Dorsolateral prefrontal cortex (tissue), 120 donors: ENCODE measurements at regions of chr19 and their contacts with region 1.

Region 1: DNA sequence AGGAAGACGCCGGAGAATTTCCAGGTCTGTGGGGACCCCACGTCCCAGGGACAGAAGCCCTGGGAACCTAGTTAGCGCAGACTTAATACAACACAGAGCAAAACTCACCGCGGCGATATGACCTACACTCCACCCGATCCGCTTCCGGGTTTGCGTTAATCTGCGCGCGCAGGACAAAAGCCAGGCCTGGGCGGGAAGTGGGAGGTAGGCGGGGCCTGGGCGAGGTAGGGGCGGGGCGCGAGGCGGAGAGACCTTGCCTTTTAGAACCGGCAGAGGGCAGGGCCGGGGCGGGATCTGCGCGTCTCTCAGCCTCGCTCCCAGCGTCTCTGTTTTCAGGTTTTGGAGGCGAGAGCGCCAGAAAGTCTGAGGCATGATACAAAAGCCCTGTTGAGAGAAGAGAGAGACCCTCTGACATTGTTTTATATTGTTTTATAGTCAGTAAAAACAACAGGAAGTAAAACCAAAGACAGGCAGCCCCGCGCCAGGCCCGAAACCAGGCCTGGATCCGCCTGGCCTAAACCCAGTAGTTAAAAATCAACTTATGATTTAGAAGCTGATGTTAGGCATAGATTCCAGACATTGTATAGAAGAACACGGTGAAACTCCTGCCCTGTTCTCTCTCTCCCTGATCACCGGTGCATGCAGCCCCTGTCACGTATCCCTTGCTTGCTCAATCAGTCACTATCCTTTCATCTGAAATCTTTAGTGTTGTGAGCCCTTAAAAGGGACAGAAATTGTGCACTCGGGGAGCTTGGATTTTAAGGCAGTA is at the start of gene ZNF611:
- DNase-seq: peak; percentile 94 to 98 (median 97)
- H3K4me3 ChIP-seq: peak within 1 kb of the TSS; percentile 64 to 95 (median 81)
- H3K27ac ChIP-seq: peak within 1 kb of the TSS; percentile 49 to 94 (median 87)
- H3K27me3 ChIP-seq: no peaks in the 10 kb centered on the region
- CTCF ChIP-seq: peak in 55 of 56 donors; percentile 14 to 83 (median 64)
- total RNA-seq, gene ZNF611: 18.1 to 38.1 (median 26.2) TPM

Region 2: GRCh38 chr19:52590728-52591127 is 144.3 kb before region 1 on chr19:
- intact Hi-C with region 1: no loop called
- DNase-seq: no peak
- H3K4me3 ChIP-seq: no peak overlapping the region
- H3K27ac ChIP-seq: no peak overlapping the region
- H3K27me3 ChIP-seq: no peaks in the 10 kb centered on the region
- CTCF ChIP-seq: no peak

Region 3: GRCh38 chr19:52601025-52601973 is 133.8 kb before region 1 on chr19:
- intact Hi-C with region 1: loop called in 1 of 2 experiments (anchors 10 kb)
- DNase-seq: peak; percentile 68 to 93 (median 82)
- H3K4me3 ChIP-seq: peak overlapping the region; percentile 25 to 80 (median 65)
- H3K27ac ChIP-seq: peak overlapping the region in 26 of 59 donors; percentile 1 to 78 (median 47)
- H3K27me3 ChIP-seq: no peaks in the 10 kb centered on the region
- CTCF ChIP-seq: peak in 51 of 56 donors; percentile 6 to 61 (median 41)

Region 4: DNA sequence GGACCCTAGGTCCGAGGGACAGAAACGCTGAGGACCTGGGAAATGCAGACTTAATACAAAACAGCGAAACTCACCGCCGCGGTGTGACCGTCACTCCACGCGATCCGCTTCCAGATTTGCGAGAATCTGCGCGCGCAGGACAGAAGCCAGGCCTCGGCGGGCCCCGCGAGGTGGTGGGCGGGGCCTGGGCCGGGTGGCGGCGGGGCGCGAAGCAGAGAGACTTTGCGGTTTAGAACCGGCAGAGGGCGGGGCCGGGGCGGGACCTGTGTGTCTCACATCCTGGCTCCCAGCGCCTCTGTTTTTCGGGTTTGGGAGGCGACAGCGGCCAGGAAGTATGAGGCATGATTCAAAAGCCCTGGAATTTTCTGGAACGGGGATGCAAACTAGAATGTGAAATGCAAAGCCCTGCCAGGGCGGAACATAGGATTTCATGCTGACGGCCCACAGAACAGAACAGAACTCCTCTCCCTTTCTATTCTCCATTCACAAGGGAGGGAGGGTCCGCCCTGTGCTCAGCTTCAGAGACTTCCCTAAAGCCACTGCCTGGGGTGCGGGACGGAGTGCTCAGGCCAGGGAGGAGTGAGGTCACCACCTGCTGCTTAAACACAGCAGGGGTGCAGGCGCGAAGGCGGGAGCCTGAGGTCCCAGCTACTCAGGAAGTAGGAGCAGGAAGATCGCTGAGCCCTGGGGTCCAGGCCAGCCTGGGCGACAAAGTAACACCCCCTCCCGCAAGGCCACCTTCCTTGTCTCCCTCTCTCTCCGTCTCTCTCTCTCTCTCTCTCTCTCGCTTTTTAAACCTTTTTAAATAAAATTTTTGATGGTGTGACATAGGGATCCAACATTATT is 44.5 kb before region 1 on chr19:
- intact Hi-C with region 1: loop called (anchors 1 to 5 kb)
- DNase-seq: peak; percentile 85 to 96 (median 90)
- H3K4me3 ChIP-seq: peak overlapping the region; percentile 56 to 89 (median 72)
- H3K27ac ChIP-seq: peak overlapping the region; percentile 19 to 99 (median 89)
- H3K27me3 ChIP-seq: no peaks in the 10 kb centered on the region
- CTCF ChIP-seq: peak in 48 of 56 donors; percentile 8 to 66 (median 44)